ENCODE measurements at regions of chr17 and their contacts with region 1.

Region 1: DNA sequence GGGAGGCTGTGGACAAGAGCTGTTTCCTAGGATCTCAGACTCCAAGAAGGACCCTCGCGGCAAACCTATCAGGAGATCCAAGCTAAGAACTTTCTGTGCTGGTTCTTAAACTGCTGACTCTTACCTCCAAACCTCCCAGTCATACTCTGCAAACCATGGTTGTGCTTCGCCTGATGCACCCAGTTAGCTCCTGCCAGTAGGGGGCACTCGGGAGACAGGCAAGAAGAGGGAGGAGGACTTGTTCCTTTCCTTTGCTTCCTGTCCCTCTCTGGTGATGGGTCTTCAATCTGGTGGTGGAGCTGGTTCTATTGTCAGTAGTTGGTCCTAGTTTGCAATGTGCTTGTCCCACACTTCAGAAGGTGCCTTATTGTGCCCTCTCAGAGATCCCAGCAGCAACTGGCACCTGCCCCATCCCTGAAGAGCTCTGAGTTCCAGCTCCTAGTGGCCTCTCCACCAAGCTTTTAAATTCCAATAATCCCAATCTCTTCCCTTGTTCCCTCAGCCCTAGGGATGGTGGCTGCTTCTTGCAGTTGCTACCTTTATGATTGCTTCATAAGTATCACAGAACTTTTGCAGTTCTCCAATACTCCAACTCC is 113.5 kb upstream of the RPL38 start:
- DNase-seq: peak; percentile 47
- H3K4me3 Mint-ChIP-seq: no peak overlapping the region
- H3K27ac Mint-ChIP-seq: no peak overlapping the region
- H3K4me1 Mint-ChIP-seq: no peaks in the 10 kb centered on the region
- H3K27me3 Mint-ChIP-seq: peaks cover 12% of the 10 kb centered on the region

Region 2: GRCh38 chr17:74027444-74027843 is 62.5 kb before region 1 on chr17:
- intact Hi-C with region 1: no loop called
- DNase-seq: no peak
- H3K4me3 Mint-ChIP-seq: no peak overlapping the region
- H3K27ac Mint-ChIP-seq: no peak overlapping the region
- H3K4me1 Mint-ChIP-seq: no peaks in the 10 kb centered on the region
- H3K27me3 Mint-ChIP-seq: peaks cover 32% of the 10 kb centered on the region

Region 3: GRCh38 chr17:74203439-74204240 is 113.7 kb after region 1 on chr17 and contains the start of gene RPL38:
- intact Hi-C with region 1: loop called (anchors 2 kb)
- DNase-seq: peak; percentile 91
- H3K4me3 Mint-ChIP-seq: peak within 1 kb of the TSS; percentile 98
- H3K27ac Mint-ChIP-seq: peak within 1 kb of the TSS; percentile 97
- H3K4me1 Mint-ChIP-seq: peaks cover 27% of the 10 kb centered on the region
- H3K27me3 Mint-ChIP-seq: peaks cover 13% of the 10 kb centered on the region
- total RNA-seq, gene RPL38: 1,248 and 1,338 TPM in 2 replicates

Measured in activated T-helper 2 cell treated with anti-CD3 and anti-CD28 coated beads, Interferon-gamma antibody, Interleukin-2, Interleukin-4, amounts not matched to agents 10 μg/mL and 5 μg/mL and 100 μg/mL, durations not matched to agents 14 hours and 24 hours and 36 hours (primary cell).